ENCODE measurements at regions of chr20 and their contacts with region 1.

Region 1: DNA sequence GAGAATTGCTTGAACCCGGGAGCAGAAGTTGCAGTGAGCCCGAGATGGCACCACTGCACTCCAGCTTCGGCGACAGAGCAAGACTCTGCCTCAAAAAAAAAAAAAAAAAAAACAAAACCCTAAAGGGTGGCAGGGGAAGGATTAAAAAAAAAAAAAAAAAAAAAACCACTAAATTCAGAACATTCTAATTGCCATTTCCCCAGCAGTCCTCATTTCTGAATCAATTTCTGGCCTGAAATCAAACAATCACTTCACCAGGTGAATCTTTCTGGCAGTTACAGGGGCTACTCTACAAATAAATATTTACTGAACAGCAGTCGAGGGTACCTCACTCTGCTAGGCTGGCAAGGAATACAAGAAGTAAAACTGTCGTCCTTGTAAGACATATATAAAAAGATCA is 1.2 kb downstream of the UQCC1 start:
- DNase-seq: no peak
- H3K4me3 ChIP-seq: peak overlapping the region; percentile 82
- H3K27ac ChIP-seq: no peak overlapping the region
- H3K4me1 ChIP-seq: peaks cover 4% of the 10 kb centered on the region
- H3K27me3 ChIP-seq: no peaks in the 10 kb centered on the region
- CTCF ChIP-seq: no peak

Region 2: DNA sequence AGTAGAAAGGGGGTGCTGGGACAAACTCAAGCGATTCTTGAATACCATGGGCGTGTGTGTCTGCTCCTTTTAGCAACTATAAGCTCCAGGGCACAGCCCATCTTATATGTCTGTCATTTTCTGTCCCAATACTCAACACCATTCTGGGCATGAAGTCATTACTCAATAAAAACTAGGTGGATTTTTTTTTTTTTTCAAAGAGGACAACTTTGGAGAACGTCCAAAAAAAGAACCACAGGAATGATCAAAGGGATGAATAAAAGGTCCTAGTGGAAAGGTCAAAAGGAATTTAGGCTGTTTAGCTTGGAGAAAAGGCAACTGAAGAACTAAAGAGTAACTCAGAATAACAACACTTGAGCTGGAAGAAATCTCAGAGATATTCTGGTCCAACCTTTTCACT is 23.3 kb before region 1 on chr20:
- CTCF ChIA-PET with region 1: no interaction called
- POLR2A ChIA-PET with region 1: interaction called, 16 read pairs
- intact Hi-C with region 1: no loop called
- DNase-seq: no peak
- H3K4me3 ChIP-seq: no peak overlapping the region
- H3K27ac ChIP-seq: no peak overlapping the region
- H3K4me1 ChIP-seq: no peaks in the 10 kb centered on the region
- H3K27me3 ChIP-seq: no peaks in the 10 kb centered on the region
- CTCF ChIP-seq: no peak

Region 3: DNA sequence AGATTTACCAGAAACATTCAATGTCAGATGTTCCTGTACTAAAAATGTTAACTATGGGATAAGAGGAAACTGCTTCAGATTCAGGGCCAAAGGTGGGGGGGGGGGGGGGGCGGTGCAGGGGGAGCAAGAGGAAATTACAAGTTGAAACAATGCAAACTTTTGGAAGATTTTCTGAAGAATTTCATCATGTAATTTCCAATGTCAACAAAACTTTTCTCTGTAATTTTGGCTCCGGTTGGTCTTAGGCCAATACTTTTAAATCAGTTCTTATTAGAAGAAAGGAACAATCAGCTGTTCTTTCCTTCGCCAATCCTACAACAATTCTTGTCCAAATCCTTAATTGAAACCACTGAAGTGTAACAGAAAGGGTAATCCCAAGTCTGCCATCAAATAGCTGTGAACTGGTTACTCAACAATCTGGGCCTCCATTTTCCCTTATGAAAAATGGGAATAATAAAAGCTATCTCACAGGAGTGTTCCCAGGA is 11.9 kb before region 1 on chr20:
- CTCF ChIA-PET with region 1: no interaction called
- POLR2A ChIA-PET with region 1: no interaction called
- intact Hi-C with region 1: no loop called
- DNase-seq: peak; percentile 11
- H3K4me3 ChIP-seq: no peak overlapping the region
- H3K27ac ChIP-seq: peak overlapping the region; percentile 56
- H3K4me1 ChIP-seq: peaks cover 14% of the 10 kb centered on the region
- H3K27me3 ChIP-seq: no peaks in the 10 kb centered on the region
- CTCF ChIP-seq: no peak